B cell (primary cell): ENCODE measurements at regions of chr3 and their contacts with region 1.

Region 1: GRCh38 chr3:113531826-113532697 is at the start of gene SIDT1:
- DNase-seq: peak; percentile 89
- ATAC-seq: peak; percentile 81
- H3K4me3 ChIP-seq: peak within 1 kb of the TSS; percentile 86 to 96 (median 95)
- H3K4me3 Mint-ChIP-seq: peak within 1 kb of the TSS; percentile 93
- H3K27ac ChIP-seq: peak within 1 kb of the TSS; percentile 86 to 87
- H3K27ac Mint-ChIP-seq: peak within 1 kb of the TSS; percentile 96
- H3K4me1 ChIP-seq: peaks cover 35 to 36% of the 10 kb centered on the region in 2 donors
- H3K4me1 Mint-ChIP-seq: peaks cover 46% of the 10 kb centered on the region
- H3K27me3 ChIP-seq: no peaks in the 10 kb centered on the region
- H3K27me3 Mint-ChIP-seq: peaks cover 6% of the 10 kb centered on the region
- CTCF ChIP-seq: no peak
- total RNA-seq, gene SIDT1: 75.4 and 84.4 TPM in 2 replicates

Region 2: DNA sequence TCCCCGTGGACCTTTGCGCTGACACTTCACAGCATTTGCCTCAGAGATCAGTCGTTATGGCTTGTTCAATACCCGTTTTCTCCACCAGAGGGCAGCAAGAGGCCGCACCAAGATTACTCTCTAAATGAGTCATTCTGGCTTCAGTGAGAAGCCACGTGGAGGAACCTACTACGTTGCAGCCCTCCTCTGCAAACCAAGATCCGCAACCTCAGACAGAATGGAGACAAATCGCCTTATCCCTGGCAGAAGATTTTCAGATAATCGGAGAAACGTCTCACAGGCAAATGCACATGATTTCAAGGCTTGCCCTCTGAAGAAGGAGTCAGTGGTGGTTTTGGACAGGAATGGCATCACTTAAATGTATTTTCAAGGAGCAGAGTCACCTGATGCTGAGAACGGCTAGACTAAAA is 480.8 kb before region 1 on chr3:
- CTCF ChIA-PET with region 1: no interaction called
- POLR2A ChIA-PET with region 1: no interaction called
- intact Hi-C with region 1: no loop called
- DNase-seq: peak; percentile 88
- ATAC-seq: peak; percentile 100
- H3K4me3 ChIP-seq: no peak overlapping the region
- H3K4me3 Mint-ChIP-seq: no peak overlapping the region
- H3K27ac ChIP-seq: no peak overlapping the region
- H3K27ac Mint-ChIP-seq: no peak overlapping the region
- H3K4me1 ChIP-seq: peaks cover 0 to 4% of the 10 kb centered on the region in 2 donors
- H3K4me1 Mint-ChIP-seq: peaks cover 2% of the 10 kb centered on the region
- H3K27me3 ChIP-seq: no peaks in the 10 kb centered on the region
- H3K27me3 Mint-ChIP-seq: no peaks in the 10 kb centered on the region
- CTCF ChIP-seq: peak; percentile 95

Region 3: GRCh38 chr3:113495035-113495434 is 37.0 kb before region 1 on chr3:
- CTCF ChIA-PET with region 1: interaction called, 9 read pairs
- POLR2A ChIA-PET with region 1: no interaction called
- intact Hi-C with region 1: loop called (anchors 1 kb)
- DNase-seq: peak; percentile 60
- ATAC-seq: peak; percentile 47
- H3K4me3 ChIP-seq: no peak overlapping the region
- H3K4me3 Mint-ChIP-seq: no peak overlapping the region
- H3K27ac ChIP-seq: no peak overlapping the region
- H3K27ac Mint-ChIP-seq: no peak overlapping the region
- H3K4me1 ChIP-seq: no peaks in the 10 kb centered on the region
- H3K4me1 Mint-ChIP-seq: no peaks in the 10 kb centered on the region
- H3K27me3 ChIP-seq: no peaks in the 10 kb centered on the region
- H3K27me3 Mint-ChIP-seq: no peaks in the 10 kb centered on the region
- CTCF ChIP-seq: peak; percentile 57

Region 4: DNA sequence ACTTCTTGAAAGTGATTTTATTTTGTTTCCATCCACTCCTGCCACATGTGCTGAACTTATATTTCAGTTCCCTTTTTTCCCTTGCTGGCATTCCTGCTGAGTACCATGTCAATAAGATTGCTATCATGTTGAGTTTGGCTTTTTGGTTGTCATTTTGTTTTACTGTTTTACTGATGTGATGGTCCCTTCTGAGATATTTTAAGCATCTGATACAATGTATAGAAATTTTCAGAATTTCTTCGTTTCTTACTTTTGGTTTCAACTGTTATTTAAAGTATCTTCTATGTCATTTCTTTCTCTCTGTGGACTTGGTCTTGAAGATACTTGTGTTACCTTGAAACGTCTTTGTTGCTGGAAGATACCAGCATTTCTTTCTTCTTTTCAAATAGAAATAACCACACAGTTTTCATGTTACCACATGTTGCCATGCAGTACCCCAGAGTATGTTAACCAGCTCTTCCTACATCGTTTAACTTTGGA is 14.4 kb after region 1 on chr3:
- CTCF ChIA-PET with region 1: interaction called, 24 read pairs
- POLR2A ChIA-PET with region 1: no interaction called
- intact Hi-C with region 1: loop called (anchors 2 kb)
- DNase-seq: peak; percentile 21
- ATAC-seq: peak; percentile 21
- H3K4me3 ChIP-seq: peak overlapping the region in 1 of 5 experiments; percentile 3
- H3K4me3 Mint-ChIP-seq: peak overlapping the region; percentile 58
- H3K27ac ChIP-seq: peak overlapping the region in 1 of 2 donors; percentile 27
- H3K27ac Mint-ChIP-seq: peak overlapping the region; percentile 67
- H3K4me1 ChIP-seq: peaks cover 4 to 13% of the 10 kb centered on the region in 2 donors
- H3K4me1 Mint-ChIP-seq: peaks cover 30% of the 10 kb centered on the region
- H3K27me3 ChIP-seq: no peaks in the 10 kb centered on the region
- H3K27me3 Mint-ChIP-seq: no peaks in the 10 kb centered on the region
- CTCF ChIP-seq: no peak

Region 5: DNA sequence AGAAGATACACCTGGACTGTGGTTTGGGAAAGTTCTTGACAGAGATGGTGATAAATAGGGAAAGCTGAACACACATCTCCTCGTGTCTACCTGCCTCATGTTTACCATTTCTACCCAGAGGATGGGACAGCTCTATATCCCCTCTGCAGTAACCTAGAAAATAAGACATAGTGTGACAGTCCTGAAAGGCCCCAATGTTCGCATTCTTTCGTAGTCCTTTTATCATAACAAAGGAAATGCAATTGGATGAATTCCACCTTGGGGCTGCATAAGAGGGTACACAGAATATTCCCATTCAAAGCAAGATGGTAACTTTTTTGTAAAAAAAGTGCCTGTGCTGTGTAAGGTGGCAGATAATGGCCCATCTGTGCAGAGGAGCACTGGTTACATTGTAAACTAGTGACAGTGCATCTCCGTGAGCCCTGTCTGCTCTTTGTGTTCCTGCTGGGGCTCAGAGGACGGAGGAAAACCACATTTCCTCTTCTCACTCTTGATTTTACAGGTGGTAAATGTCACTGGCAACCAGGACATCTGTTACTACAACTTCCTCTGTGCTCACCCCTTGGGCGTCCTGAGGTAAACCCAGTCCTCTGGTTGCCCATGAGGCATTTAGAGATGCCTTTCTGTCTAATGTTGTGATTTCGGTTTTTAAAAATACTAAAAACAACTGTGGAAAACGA is 74.6 kb after region 1 on chr3:
- CTCF ChIA-PET with region 1: interaction called, 3 read pairs
- POLR2A ChIA-PET with region 1: no interaction called
- intact Hi-C with region 1: loop called (anchors 2 kb)
- DNase-seq: peak; percentile 78
- ATAC-seq: peak; percentile 96
- H3K4me3 ChIP-seq: no peak overlapping the region
- H3K4me3 Mint-ChIP-seq: peak overlapping the region; percentile 69
- H3K27ac ChIP-seq: peak overlapping the region; percentile 42 to 63
- H3K27ac Mint-ChIP-seq: peak overlapping the region; percentile 85
- H3K4me1 ChIP-seq: peaks cover 19 to 23% of the 10 kb centered on the region in 2 donors
- H3K4me1 Mint-ChIP-seq: peaks cover 27% of the 10 kb centered on the region
- H3K27me3 ChIP-seq: no peaks in the 10 kb centered on the region
- H3K27me3 Mint-ChIP-seq: no peaks in the 10 kb centered on the region
- CTCF ChIP-seq: no peak